ENCODE measurements at regions of chr13 and their contacts with region 1.

Region 1: DNA sequence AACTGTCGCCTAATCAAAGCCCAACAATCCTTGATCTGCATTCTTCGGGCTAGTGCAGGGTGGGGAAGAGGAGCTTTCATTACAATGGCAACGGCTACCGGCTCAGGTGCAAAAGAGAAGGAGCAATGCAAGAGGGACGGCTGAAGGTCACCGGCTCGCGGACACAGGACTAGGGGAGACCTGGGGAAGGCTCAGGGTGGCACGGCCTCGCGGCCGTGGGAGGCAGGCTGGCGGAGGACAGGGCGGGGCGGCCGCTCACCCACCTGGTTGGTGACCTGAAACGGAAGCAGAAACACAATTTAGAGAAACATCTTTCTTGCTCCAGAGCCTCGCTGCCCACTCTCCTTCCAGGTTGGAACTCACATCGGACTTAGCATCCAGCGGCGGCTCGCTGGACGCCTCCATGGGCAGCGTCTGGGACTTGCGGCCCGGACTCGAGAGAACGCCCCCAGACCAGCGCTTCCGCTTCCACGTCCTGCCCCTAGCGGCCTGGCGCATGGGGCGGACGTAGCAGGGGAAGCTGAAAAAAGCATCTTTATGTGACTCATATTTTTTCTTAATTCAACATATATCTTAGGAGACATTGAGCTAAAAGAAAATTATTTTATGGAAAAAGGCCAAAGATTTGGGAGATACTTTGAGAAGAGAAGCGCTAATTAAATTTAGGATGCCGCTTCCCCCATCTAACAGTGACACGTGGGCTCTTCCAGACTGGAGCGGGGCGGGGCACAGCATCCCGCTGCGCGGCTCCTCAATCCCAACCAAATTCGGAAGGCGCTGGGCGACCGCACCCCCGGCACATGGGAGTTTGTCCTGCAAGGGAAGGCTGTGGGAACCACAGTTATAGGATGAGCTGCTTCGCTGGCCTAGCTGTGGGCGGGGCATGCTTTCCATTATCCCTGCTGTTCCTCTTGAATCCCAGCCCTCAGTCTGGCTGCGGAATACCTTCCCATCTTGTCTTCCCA is at the start of gene COMMD6:
- DNase-seq: peak; percentile 78
- ATAC-seq: peak; percentile 96
- H3K4me3 Mint-ChIP-seq: peak within 1 kb of the TSS; percentile 94
- H3K27ac Mint-ChIP-seq: peak within 1 kb of the TSS; percentile 89
- H3K4me1 Mint-ChIP-seq: peaks cover 33% of the 10 kb centered on the region
- H3K27me3 Mint-ChIP-seq: no peaks in the 10 kb centered on the region
- total RNA-seq, gene COMMD6: 97.6 to 130 TPM

Region 2: GRCh38 chr13:75202981-75203380 is 334.7 kb before region 1 on chr13:
- CTCF ChIA-PET with region 1: no interaction called
- DNase-seq: no peak
- ATAC-seq: no peak
- H3K4me3 Mint-ChIP-seq: no peak overlapping the region
- H3K27ac Mint-ChIP-seq: no peak overlapping the region
- H3K4me1 Mint-ChIP-seq: no peaks in the 10 kb centered on the region
- H3K27me3 Mint-ChIP-seq: peaks cover 20% of the 10 kb centered on the region

Region 3: GRCh38 chr13:75521956-75522355 is 15.7 kb before region 1 on chr13:
- CTCF ChIA-PET with region 1: no interaction called
- DNase-seq: no peak
- ATAC-seq: no peak
- H3K4me3 Mint-ChIP-seq: no peak overlapping the region
- H3K27ac Mint-ChIP-seq: no peak overlapping the region
- H3K4me1 Mint-ChIP-seq: no peaks in the 10 kb centered on the region
- H3K27me3 Mint-ChIP-seq: no peaks in the 10 kb centered on the region

Region 4: GRCh38 chr13:75549262-75550158 is 11.8 kb after region 1 on chr13 and contains the start of gene UCHL3:
- CTCF ChIA-PET with region 1: interaction called, 10 read pairs
- DNase-seq: peak; percentile 98
- ATAC-seq: peak; percentile 95
- H3K4me3 Mint-ChIP-seq: peak within 1 kb of the TSS; percentile 100
- H3K27ac Mint-ChIP-seq: peak within 1 kb of the TSS; percentile 95
- H3K4me1 Mint-ChIP-seq: peaks cover 36% of the 10 kb centered on the region
- H3K27me3 Mint-ChIP-seq: no peaks in the 10 kb centered on the region
- total RNA-seq, gene UCHL3: 31.1 to 36.7 TPM